Lower leg skin (tissue), 4 donors: ENCODE measurements at regions of chr16 and their contacts with region 1.

Region 1: DNA sequence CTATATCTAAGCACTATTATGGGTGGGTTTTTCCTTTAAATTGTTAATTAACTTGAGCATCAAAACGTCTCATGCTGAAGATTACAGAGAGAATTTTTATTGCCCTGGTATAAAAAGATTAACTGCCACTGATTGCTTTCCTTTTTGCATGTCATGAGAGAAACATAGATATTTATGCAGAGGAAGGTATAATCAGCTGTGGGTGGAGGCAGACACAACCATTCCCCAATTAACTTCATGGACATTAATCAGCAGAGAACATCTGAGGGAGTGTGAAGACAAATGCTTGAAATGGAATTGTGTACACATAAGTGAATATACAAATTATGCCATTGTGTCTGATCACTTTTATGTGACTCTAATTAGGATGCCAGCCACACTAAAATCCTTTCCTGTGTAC is 115.2 kb upstream of the CPHXL start:
- DNase-seq: no peak
- H3K4me3 ChIP-seq: no peak overlapping the region
- CTCF ChIP-seq: no peak
- POLR2A ChIP-seq: no peak

Region 2: DNA sequence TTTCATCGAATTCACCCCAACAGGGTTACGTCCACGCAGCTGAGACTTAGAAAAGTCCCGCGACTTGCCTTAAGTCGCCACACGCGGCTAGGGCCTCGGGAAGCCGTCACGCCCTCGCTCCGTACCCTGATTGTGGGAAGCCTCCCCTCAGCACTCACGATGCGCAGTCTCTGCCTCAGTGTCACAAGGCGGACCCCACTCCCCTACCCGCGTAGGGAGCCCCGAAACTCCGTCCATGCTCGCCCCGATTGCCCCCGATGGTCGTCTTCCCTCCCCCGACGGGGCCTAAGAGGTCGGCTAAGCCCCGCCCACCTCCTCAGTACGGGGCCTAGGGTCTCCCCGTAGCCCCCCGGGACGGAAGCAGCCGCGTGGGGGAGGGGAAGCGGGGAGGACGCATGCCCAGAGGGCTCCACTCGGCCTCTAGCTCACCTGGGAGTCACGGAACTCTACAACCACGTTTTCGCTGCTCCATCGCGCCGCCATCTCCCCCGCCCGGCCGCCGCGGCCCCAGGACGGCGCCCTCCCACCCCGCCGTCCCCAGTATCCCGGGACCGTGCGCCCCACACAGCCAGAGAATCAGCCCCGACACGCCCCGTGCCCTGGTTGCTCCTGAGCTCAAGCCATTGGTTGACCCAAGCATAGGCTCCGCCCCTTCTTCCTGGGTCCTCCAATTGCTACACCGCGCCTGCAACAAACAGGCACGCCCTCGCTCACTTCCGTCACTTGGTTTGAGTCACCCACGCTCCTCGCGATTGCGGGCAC is 856.8 kb before region 1 on chr16 and contains the start of gene WDR59:
- intact Hi-C with region 1: loop called (anchors 5 kb)
- DNase-seq: peak; percentile 100
- H3K4me3 ChIP-seq: peak within 1 kb of the TSS; percentile 99
- CTCF ChIP-seq: no peak
- POLR2A ChIP-seq: no peak
- total RNA-seq, gene WDR59: 26.0 to 59.4 (median 48.4) TPM